Activated CD8-positive, alpha-beta T cell treated with anti-CD3 and anti-CD28 coated beads for 36 hours (primary cell): ENCODE measurements at regions of chr1 and their contacts with region 1.

Region 1: DNA sequence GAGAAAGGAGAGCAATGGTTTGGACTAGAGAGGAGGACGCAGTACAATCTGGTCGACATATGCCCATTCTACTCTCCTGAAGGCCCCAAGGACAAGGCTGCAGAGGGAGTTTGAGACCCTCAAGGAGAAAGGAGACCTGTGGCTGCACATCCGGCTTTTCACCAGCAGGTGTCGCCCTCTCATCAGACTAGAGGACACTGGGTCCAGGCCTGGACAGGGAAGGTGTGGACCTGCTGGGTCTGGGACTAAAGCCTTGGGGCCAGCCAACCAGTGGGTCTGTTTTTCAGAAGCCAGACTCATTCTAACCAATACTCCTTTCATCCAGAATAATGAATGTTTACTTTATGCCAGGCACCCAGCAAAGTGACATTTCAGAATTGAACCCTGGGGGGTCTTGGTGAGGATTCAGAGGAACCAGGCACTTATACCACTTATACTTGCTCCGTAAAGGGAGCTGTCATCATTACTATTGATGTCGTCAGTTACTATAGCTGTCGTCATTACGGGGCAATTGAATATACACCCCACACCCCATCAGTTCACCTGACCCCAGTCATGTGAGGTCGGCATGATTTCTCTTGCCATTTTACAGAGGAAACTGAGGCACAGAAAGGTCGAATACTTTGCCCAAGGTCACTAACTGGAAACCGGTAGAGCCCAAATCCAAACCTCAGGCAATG is 5.1 kb downstream of the SRARP start:
- DNase-seq: peak; percentile 87
- ATAC-seq: peak; percentile 60
- H3K4me3 Mint-ChIP-seq: no peak overlapping the region
- H3K27ac Mint-ChIP-seq: no peak overlapping the region
- H3K4me1 Mint-ChIP-seq: peaks cover 15% of the 10 kb centered on the region
- H3K27me3 Mint-ChIP-seq: peaks cover 5% of the 10 kb centered on the region
- CTCF ChIP-seq: peak; percentile 99

Region 2: GRCh38 chr1:15796086-15796462 is 213.1 kb before region 1 on chr1:
- CTCF ChIA-PET with region 1: interaction called, 10 read pairs
- POLR2A ChIA-PET with region 1: no interaction called
- intact Hi-C with region 1: no loop called
- DNase-seq: no peak
- ATAC-seq: no peak
- H3K4me3 Mint-ChIP-seq: no peak overlapping the region
- H3K27ac Mint-ChIP-seq: no peak overlapping the region
- H3K4me1 Mint-ChIP-seq: peaks cover 11% of the 10 kb centered on the region
- H3K27me3 Mint-ChIP-seq: peaks cover 1% of the 10 kb centered on the region
- CTCF ChIP-seq: no peak

Region 3: GRCh38 chr1:16055613-16056520 is 46.7 kb after region 1 on chr1:
- CTCF ChIA-PET with region 1: interaction called, 29 read pairs
- POLR2A ChIA-PET with region 1: no interaction called
- intact Hi-C with region 1: loop called (anchors 5 kb)
- DNase-seq: peak; percentile 96
- ATAC-seq: peak; percentile 100
- H3K4me3 Mint-ChIP-seq: no peak overlapping the region
- H3K27ac Mint-ChIP-seq: no peak overlapping the region
- H3K4me1 Mint-ChIP-seq: peaks cover 2% of the 10 kb centered on the region
- H3K27me3 Mint-ChIP-seq: no peaks in the 10 kb centered on the region
- CTCF ChIP-seq: peak; percentile 95

Region 4: DNA sequence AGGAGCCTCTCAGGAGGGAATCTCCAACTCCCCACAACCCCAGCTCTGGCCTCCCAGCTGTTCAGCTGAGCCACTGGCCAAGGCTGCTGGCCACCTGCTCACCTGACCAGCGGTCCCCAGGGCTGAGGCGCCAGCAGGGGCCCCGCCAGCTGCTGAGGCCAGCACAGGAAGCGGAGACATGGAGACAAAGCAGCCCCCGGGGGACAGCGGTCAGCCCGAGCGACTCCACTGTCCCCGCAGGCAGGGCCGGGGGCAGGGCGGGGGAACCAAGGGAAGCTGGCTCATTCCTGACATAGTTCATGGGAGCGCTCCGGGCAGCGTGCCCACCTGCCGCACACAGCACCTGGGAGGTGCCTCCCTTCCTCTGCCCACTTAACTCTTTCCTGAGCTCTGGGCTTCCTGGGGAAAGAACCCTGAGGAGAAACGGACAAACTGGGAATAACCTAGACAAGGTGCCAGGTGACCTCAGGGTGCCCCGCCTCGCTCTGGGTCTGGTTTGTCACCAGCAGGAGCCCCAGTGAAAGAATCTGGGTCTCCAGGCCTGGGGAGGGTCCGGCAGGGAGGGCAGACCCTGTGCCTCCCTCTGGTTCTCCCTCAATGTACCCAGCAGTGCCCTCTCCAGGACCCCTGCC is 136.0 kb after region 1 on chr1:
- CTCF ChIA-PET with region 1: no interaction called
- POLR2A ChIA-PET with region 1: no interaction called
- intact Hi-C with region 1: no loop called
- DNase-seq: no peak
- ATAC-seq: no peak
- H3K4me3 Mint-ChIP-seq: no peak overlapping the region
- H3K27ac Mint-ChIP-seq: no peak overlapping the region
- H3K4me1 Mint-ChIP-seq: peaks cover 13% of the 10 kb centered on the region
- H3K27me3 Mint-ChIP-seq: peaks cover 2% of the 10 kb centered on the region
- CTCF ChIP-seq: no peak

Region 5: DNA sequence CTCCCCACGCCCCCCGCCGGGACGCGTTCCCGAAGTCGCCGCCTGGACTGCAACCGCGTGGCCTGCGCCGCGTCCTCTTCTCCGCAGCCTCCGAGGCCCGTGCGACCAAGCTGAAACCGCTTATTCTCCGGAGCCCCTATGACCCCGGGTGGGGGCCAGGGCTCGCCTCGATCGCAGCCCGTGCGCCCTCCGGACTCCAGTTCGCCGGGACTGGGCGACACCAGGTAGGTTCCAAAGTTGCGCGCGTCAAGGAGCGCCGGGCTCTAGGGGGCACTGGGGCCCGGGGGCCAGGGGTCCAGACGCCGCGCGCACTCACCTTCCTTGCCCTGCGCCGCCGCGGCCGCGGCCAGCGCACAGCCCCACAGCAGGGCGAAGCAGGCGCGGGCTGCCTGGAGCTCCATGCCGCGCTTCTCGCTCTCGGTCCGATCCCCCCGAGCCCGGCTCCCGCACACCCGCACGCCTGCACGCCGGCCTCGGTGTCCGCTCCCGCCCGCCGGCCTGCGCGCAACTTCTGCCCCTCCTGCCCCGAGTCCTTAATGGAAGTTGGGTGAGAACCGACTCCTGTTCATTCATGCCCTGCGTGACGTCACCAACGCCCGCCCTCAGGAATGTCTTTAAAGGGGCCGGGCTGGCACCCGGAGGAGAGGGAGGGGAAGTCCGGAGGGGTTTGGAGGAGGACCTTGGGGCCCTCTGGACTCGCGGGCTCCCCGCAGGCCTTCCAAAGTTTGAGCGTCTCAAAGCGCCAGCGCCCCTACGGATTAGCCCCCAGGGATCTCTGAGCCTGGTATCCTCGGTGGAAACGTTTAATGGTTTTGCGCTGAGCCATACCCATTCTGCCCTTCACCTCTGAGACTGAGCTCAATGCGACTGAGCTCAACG is 146.6 kb after region 1 on chr1 and contains the start of gene EPHA2:
- CTCF ChIA-PET with region 1: no interaction called
- POLR2A ChIA-PET with region 1: no interaction called
- intact Hi-C with region 1: no loop called
- DNase-seq: no peak
- ATAC-seq: no peak
- H3K4me3 Mint-ChIP-seq: peak within 1 kb of the TSS; percentile 16
- H3K27ac Mint-ChIP-seq: no peak within 1 kb of the TSS
- H3K4me1 Mint-ChIP-seq: peaks cover 23% of the 10 kb centered on the region
- H3K27me3 Mint-ChIP-seq: peaks cover 23% of the 10 kb centered on the region
- CTCF ChIP-seq: no peak
- total RNA-seq, gene EPHA2: not detected